Pancreas (tissue), 10 donors: ENCODE measurements at regions of chr6 and their contacts with region 1.

Region 1: GRCh38 chr6:128731249-128732165 is 151.4 kb upstream of the LAMA2 start:
- DNase-seq: no peak
- ATAC-seq: peak in 3 of 4 donors; percentile 68 to 73 (median 71)
- H3K4me3 ChIP-seq: no peak overlapping the region
- H3K27ac ChIP-seq: no peak overlapping the region
- H3K4me1 ChIP-seq: no peaks in the 10 kb centered on the region
- H3K27me3 ChIP-seq: no peaks in the 10 kb centered on the region
- CTCF ChIP-seq: peak in 3 of 4 donors; percentile 23 to 57 (median 33)

Region 2: DNA sequence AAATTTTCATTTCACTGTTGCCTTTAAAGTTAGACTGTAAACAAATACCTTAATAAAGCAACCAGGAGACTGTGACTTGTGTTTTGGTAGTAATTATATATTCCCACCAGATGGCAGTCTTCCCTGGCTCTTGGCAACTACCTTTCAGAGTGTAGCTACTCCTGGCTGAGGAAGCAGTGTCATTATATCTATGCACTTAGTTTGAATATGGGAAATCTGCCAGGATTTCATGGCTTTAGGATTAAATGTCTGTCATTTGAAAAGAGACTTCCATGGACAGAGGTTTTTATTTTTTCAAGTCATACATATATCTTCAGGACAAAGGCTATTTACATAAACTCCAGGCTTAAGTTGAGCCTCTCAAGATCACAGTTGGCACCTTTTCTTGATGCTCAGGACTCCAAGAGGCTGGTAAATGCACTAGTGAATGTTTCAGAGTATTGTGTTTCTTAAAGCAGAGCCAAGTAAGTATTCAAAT is 994.5 kb before region 1 on chr6:
- intact Hi-C with region 1: loop called in 2 of 3 experiments (anchors 10 kb)
- DNase-seq: peak in 4 of 6 donors; percentile 11 to 46 (median 16)
- ATAC-seq: peak; percentile 85 to 95 (median 94)
- H3K4me3 ChIP-seq: no peak overlapping the region
- H3K27ac ChIP-seq: no peak overlapping the region
- H3K4me1 ChIP-seq: no peaks in the 10 kb centered on the region
- H3K27me3 ChIP-seq: peaks cover 0 to 6% (median 0%) of the 10 kb centered on the region in 4 donors
- CTCF ChIP-seq: peak; percentile 27 to 48 (median 45)

Region 3: GRCh38 chr6:127841811-127842210 is 889.7 kb before region 1 on chr6:
- intact Hi-C with region 1: loop called in 1 of 3 experiments (anchors 10 kb)
- DNase-seq: no peak
- ATAC-seq: no peak
- H3K4me3 ChIP-seq: no peak overlapping the region
- H3K27ac ChIP-seq: no peak overlapping the region
- H3K4me1 ChIP-seq: no peaks in the 10 kb centered on the region
- H3K27me3 ChIP-seq: peaks cover 0 to 6% (median 0%) of the 10 kb centered on the region in 4 donors
- CTCF ChIP-seq: no peak

Region 4: DNA sequence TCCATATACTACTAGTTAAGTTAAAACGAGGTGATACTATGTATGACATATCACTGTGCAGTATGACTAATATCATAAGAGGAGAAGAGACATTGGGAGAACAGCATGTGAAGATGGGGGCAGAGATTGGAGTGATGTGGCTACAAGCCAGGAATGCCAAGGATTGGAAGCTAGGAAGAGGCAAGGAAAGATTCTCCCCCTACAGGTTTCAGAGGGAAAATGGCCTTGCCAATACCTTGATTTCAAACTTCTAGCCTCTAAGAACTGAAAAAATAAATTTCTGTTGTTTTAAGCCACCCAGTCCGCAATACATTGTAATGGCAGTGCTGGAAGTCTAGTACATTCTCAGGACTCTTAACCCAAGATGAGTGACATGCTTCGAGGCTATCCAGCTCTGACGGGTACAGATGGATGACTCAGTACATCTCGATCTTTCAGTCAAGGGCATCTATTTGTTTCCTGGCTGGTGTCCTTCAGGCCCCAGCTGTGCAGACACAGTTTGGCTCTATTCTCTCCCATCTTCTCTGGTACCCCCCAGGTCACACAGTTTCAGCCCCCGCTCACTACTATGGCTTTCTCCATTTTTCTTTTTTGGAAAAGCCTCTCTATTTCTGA is 775.1 kb before region 1 on chr6:
- intact Hi-C with region 1: no loop called
- DNase-seq: no peak
- ATAC-seq: no peak
- H3K4me3 ChIP-seq: no peak overlapping the region
- H3K27ac ChIP-seq: no peak overlapping the region
- H3K4me1 ChIP-seq: no peaks in the 10 kb centered on the region
- H3K27me3 ChIP-seq: no peaks in the 10 kb centered on the region
- CTCF ChIP-seq: no peak